Posterior cingulate gyrus (tissue), 11 donors: ENCODE measurements at regions of chrX and their contacts with region 1.

Region 1: GRCh38 chrX:31464306-31464915 is 392.6 kb upstream of the FTHL17 start:
- DNase-seq: no peak

Region 2: GRCh38 chrX:30735839-30736238 is 728.6 kb before region 1 on chrX:
- intact Hi-C with region 1: loop called (anchors 10 kb)
- DNase-seq: peak in 6 of 10 donors; percentile 17 to 89 (median 46)

Region 3: GRCh38 chrX:31500920-31501319 is 36.5 kb after region 1 on chrX:
- intact Hi-C with region 1: no loop called
- DNase-seq: no peak